OCI-LY7 (cell line): ENCODE measurements at regions of chr10 and their contacts with region 1.

Region 1: DNA sequence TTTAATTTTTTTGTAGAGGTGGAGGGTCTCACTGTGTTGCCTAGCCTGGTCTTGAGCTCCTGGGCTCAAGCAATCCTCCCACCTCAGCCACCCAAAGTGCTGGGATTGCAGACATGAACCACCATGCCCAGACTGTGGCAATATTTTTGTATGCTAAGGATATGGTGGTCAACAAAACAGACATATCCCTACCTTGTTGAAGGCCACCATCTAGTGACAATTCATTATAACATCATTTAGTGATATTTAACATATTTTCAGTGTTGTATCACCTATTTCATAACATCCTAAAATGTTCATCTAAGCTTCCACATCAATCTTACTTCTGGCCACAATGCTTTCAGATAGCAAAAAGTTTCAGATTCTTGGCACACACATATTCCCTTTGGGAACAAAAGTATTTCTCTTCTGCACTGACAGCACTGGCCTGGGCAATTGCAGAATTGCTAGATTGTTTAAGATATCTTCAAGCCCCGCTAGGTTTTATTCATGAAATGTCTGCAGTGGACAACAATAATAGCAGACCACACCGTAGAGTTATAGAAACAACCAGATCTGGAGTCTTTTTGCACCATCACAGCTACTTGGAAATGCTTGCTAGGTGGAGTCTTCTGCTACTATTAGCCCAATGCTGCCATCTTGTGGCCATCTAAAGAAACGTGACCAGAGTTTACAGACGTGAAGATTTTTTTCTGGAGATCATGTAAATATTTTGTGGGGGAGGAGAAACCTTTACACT is 58.4 kb downstream of the DNAJC12 start:
- DNase-seq: peak; percentile 91
- H3K4me3 ChIP-seq: no peak overlapping the region
- H3K27ac ChIP-seq: peak overlapping the region; percentile 85
- H3K4me1 ChIP-seq: peaks cover 64% of the 10 kb centered on the region
- CTCF ChIP-seq: peak; percentile 88

Region 2: GRCh38 chr10:67306588-67307205 is 472.9 kb before region 1 on chr10:
- CTCF ChIA-PET with region 1: no interaction called
- POLR2A ChIA-PET with region 1: no interaction called
- intact Hi-C with region 1: loop called (anchors 5 kb)
- DNase-seq: peak; percentile 22
- H3K4me3 ChIP-seq: no peak overlapping the region
- H3K27ac ChIP-seq: no peak overlapping the region
- H3K4me1 ChIP-seq: no peaks in the 10 kb centered on the region
- CTCF ChIP-seq: peak; percentile 80

Region 3: GRCh38 chr10:67666416-67667034 is 113.1 kb before region 1 on chr10:
- CTCF ChIA-PET with region 1: interaction called, 8 read pairs
- POLR2A ChIA-PET with region 1: interaction called, 9 read pairs
- intact Hi-C with region 1: loop called (anchors 1 kb)
- DNase-seq: peak; percentile 50
- H3K4me3 ChIP-seq: no peak overlapping the region
- H3K27ac ChIP-seq: no peak overlapping the region
- H3K4me1 ChIP-seq: no peaks in the 10 kb centered on the region
- CTCF ChIP-seq: peak; percentile 84

Region 4: DNA sequence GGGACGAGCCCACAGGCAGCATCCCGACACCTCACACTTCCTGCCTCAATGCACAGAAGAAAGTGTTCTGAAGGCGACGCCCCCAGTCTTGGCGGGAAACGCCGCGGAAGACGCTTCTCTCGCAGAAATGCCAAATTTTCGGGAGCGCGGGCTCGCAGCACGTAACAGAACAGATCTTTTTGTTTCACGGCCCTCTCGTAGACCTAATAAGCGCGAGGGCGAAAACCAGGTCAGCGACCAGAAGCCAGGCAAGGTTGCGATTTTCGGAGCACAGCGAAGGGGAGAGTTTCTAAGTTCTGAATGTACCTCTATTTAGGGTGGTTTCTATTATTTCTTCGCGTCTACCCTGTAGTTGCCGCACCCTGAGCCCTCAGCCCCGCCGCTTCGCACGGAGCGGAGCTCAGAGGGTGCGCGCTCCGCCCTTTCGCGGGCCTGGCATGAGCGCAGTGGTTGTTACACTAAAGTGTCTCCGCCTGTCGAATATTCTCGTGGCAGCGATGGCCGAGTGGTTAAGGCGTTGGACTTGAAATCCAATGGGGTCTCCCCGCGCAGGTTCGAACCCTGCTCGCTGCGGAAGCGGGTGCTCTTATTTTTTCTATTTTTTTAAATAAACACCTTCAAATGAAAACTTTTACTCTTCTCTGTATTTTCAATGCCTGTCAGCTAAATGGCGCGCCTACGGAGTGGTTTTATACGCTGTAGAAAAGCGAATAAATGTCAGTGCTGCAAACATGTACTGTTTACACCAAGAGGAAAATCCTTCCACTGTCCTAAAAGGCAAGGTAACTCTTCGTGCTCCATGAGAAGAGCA is 15.4 kb before region 1 on chr10:
- CTCF ChIA-PET with region 1: no interaction called
- POLR2A ChIA-PET with region 1: interaction called, 12 read pairs
- intact Hi-C with region 1: no loop called
- DNase-seq: peak; percentile 99
- H3K4me3 ChIP-seq: peak overlapping the region; percentile 74
- H3K27ac ChIP-seq: peak overlapping the region; percentile 86
- H3K4me1 ChIP-seq: peaks cover 21% of the 10 kb centered on the region
- CTCF ChIP-seq: no peak